Mammary epithelial cell (primary cell): ENCODE measurements at regions of chr6 and their contacts with region 1.

Region 1: DNA sequence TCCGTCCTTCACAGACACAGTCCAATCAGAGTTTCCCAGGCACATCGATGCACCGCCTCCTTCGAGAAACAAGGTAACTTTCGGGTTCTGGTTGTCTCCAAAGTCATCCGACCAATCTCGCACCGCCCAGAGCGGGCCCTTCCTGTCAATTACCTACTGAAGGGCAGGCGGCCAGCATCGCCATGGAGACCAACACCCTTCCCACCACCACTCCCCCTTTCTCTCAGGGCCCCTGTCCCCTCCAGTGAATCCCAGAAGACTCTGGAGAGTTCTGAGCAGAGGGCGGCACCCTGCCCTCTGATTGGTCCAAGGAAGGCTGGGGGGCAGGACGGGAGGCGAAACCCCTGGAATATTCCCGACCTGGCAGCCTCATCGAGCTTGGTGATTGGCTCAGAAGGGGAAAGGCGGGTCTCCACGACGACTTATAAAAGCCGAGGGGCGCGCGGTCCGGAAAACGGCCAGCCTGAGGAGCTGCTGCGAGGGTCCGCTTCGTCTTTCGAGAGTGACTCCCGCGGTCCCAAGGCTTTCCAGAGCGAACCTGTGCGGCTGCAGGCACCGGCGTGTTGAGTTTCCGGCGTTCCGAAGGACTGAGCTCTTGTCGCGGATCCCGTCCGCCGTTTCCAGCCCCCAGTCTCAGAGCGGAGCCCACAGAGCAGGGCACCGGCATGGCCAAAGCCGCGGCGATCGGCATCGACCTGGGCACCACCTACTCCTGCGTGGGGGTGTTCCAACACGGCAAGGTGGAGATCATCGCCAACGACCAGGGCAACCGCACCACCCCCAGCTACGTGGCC is at the start of gene HSPA1B:
- DNase-seq: peak; percentile 100
- H3K4me3 ChIP-seq: peak within 1 kb of the TSS; percentile 64 to 75 (median 67)
- H3K27ac ChIP-seq: peak within 1 kb of the TSS; percentile 90
- H3K4me1 ChIP-seq: peaks cover 49% of the 10 kb centered on the region
- H3K27me3 ChIP-seq: no peaks in the 10 kb centered on the region
- CTCF ChIP-seq: no peak
- total RNA-seq, gene HSPA1B: 60.8 to 74.8 TPM

Region 2: GRCh38 chr6:31776989-31777666 is 50.4 kb before region 1 on chr6 and contains the start of gene VWA7:
- CTCF ChIA-PET with region 1: interaction called, 9 read pairs
- dilution Hi-C with region 1: no loop called
- in situ Hi-C with region 1: no loop called
- intact Hi-C with region 1: loop called (anchors 1 kb)
- DNase-seq: peak; percentile 91
- H3K4me3 ChIP-seq: peak within 1 kb of the TSS in 2 of 3 experiments; percentile 3 to 26
- H3K27ac ChIP-seq: peak within 1 kb of the TSS; percentile 44
- H3K4me1 ChIP-seq: peaks cover 26% of the 10 kb centered on the region
- H3K27me3 ChIP-seq: no peaks in the 10 kb centered on the region
- CTCF ChIP-seq: no peak
- total RNA-seq, gene VWA7: 1.2 to 1.5 TPM

Region 3: DNA sequence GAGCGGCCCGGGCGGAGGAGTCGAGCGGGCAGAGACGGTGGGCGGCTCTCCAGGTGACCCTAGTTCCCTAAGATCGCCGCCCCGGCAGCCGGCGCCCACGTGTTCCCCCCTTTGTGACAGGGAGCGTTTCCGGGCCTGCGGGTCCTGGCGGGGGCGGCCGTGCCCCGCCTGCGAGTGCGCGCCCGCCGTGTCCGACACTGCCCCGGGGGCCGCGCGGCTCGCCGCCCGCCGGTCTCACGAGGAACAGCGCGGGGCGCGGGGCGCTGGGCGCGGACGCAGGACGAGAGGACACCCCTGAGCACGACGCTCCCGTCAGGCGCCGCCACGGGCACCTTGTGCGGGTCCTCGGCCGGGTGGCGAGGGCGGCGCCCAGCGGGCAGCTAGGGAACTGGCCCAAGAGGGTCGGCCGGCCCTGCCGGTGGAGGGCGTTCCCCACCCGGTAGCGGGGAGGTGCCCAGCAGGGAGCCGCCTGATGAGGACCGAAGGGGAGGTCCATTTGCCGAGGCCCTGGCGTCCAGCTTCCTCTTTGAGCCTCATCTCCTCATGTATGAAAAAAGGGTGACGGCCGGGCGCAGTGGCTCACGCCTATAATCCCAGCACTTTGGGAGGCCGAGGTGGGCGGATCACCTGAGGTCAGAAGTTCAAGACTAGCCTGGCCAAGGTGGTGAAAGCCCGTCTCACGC is 31.7 kb before region 1 on chr6 and contains the start of gene VARS1:
- CTCF ChIA-PET with region 1: no interaction called
- dilution Hi-C with region 1: no loop called
- in situ Hi-C with region 1: no loop called
- intact Hi-C with region 1: loop called (anchors 2 kb)
- DNase-seq: peak; percentile 84
- H3K4me3 ChIP-seq: peak within 1 kb of the TSS; percentile 54 to 88 (median 82)
- H3K27ac ChIP-seq: peak within 1 kb of the TSS; percentile 87
- H3K4me1 ChIP-seq: peaks cover 33% of the 10 kb centered on the region
- H3K27me3 ChIP-seq: no peaks in the 10 kb centered on the region
- CTCF ChIP-seq: peak; percentile 47 to 87
- total RNA-seq, gene VARS1: 71.8 to 131 TPM

Region 4: GRCh38 chr6:31806465-31807272 is 20.8 kb before region 1 on chr6 and contains the start of gene LSM2:
- CTCF ChIA-PET with region 1: no interaction called
- dilution Hi-C with region 1: no loop called
- in situ Hi-C with region 1: no loop called
- intact Hi-C with region 1: loop called (anchors 1 kb)
- DNase-seq: peak; percentile 93
- H3K4me3 ChIP-seq: peak within 1 kb of the TSS; percentile 65 to 96 (median 74)
- H3K27ac ChIP-seq: peak within 1 kb of the TSS; percentile 56
- H3K4me1 ChIP-seq: peaks cover 6% of the 10 kb centered on the region
- H3K27me3 ChIP-seq: no peaks in the 10 kb centered on the region
- CTCF ChIP-seq: peak in 1 of 2 donors; percentile 31
- total RNA-seq, gene LSM2: 23.8 to 55.0 TPM

Region 5: GRCh38 chr6:31862344-31863227 is 35.1 kb after region 1 on chr6 and contains the start of gene NEU1:
- CTCF ChIA-PET with region 1: interaction called, 10 read pairs
- dilution Hi-C with region 1: no loop called
- in situ Hi-C with region 1: no loop called
- intact Hi-C with region 1: no loop called
- DNase-seq: peak; percentile 100
- H3K4me3 ChIP-seq: peak within 1 kb of the TSS; percentile 76 to 94 (median 86)
- H3K27ac ChIP-seq: peak within 1 kb of the TSS; percentile 50
- H3K4me1 ChIP-seq: peaks cover 10% of the 10 kb centered on the region
- H3K27me3 ChIP-seq: no peaks in the 10 kb centered on the region
- CTCF ChIP-seq: no peak
- total RNA-seq, gene NEU1: 27.8 to 42.5 TPM

Region 6: GRCh38 chr6:31945507-31946369 is 118.3 kb after region 1 on chr6 and contains the start of gene CFB:
- CTCF ChIA-PET with region 1: interaction called, 12 read pairs
- dilution Hi-C with region 1: no loop called
- in situ Hi-C with region 1: no loop called
- intact Hi-C with region 1: no loop called
- DNase-seq: peak; percentile 95
- H3K4me3 ChIP-seq: peak within 1 kb of the TSS in 2 of 3 experiments; percentile 4 to 30
- H3K27ac ChIP-seq: peak within 1 kb of the TSS; percentile 65
- H3K4me1 ChIP-seq: peaks cover 19% of the 10 kb centered on the region
- H3K27me3 ChIP-seq: no peaks in the 10 kb centered on the region
- CTCF ChIP-seq: no peak
- total RNA-seq, gene CFB: 1.7 to 7.9 TPM